Activated CD8-positive, alpha-beta T cell treated with anti-CD3 and anti-CD28 coated beads for 36 hours (primary cell): ENCODE measurements at regions of chr12 and their contacts with region 1.

Region 1: DNA sequence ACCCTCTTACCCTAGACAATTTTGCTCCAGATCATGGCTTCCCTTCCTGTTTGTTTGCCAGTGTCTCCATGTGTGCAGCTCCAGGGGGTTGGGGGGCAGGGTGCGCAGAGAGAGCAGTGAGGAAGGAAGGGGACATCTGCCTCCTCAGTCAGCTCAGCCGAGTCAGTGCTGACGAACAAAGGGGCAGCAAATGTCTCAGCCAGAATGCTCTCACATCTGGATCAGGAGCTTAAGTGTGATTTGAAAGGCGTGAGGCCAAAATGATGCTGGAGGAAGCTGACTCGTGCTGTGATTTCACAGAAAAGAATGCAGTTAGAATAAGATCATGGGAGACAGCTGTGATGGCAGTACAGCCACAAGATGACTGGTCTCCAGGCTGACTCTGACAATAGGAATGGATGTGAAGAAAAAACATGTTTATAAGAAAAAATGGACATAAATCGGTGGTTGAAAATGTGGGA is 27.1 kb upstream of the CDK17 start:
- DNase-seq: peak; percentile 75
- ATAC-seq: peak; percentile 76
- H3K4me3 Mint-ChIP-seq: no peak overlapping the region
- H3K27ac Mint-ChIP-seq: peak overlapping the region; percentile 65
- H3K4me1 Mint-ChIP-seq: peaks cover 36% of the 10 kb centered on the region
- H3K27me3 Mint-ChIP-seq: no peaks in the 10 kb centered on the region
- CTCF ChIP-seq: no peak

Region 2: GRCh38 chr12:96495841-96496545 is 68.7 kb after region 1 on chr12:
- CTCF ChIA-PET with region 1: no interaction called
- POLR2A ChIA-PET with region 1: no interaction called
- intact Hi-C with region 1: no loop called
- DNase-seq: no peak
- ATAC-seq: no peak
- H3K4me3 Mint-ChIP-seq: no peak overlapping the region
- H3K27ac Mint-ChIP-seq: no peak overlapping the region
- H3K4me1 Mint-ChIP-seq: peaks cover 15% of the 10 kb centered on the region
- H3K27me3 Mint-ChIP-seq: no peaks in the 10 kb centered on the region
- CTCF ChIP-seq: no peak

Region 3: GRCh38 chr12:96571101-96571862 is 144.0 kb after region 1 on chr12:
- CTCF ChIA-PET with region 1: no interaction called
- POLR2A ChIA-PET with region 1: no interaction called
- intact Hi-C with region 1: loop called (anchors 5 kb)
- DNase-seq: peak; percentile 44
- ATAC-seq: peak; percentile 90
- H3K4me3 Mint-ChIP-seq: peak overlapping the region; percentile 51
- H3K27ac Mint-ChIP-seq: peak overlapping the region; percentile 79
- H3K4me1 Mint-ChIP-seq: peaks cover 21% of the 10 kb centered on the region
- H3K27me3 Mint-ChIP-seq: peaks cover 3% of the 10 kb centered on the region
- CTCF ChIP-seq: no peak